ENCODE measurements at regions of chr19 and their contacts with region 1.

Region 1: GRCh38 chr19:47094557-47095475 is 18.8 kb downstream of the ZC3H4 start:
- DNase-seq: no peak
- H3K4me3 ChIP-seq: no peak overlapping the region
- H3K27ac ChIP-seq: no peak overlapping the region; the same call in 1 of the 2 replicates
- H3K4me1 ChIP-seq: peaks cover 2 to 8% (median 4%) of the 10 kb centered on the region in 4 experiments; a peak in 3 of 7 replicates
- H3K27me3 ChIP-seq: no peaks in the 10 kb centered on the region; a peak in 1 of 7 replicates
- CTCF ChIP-seq: no peak
- EP300 ChIP-seq: no peak
- POLR2A ChIP-seq: no peak
- RAD21 ChIP-seq: no peak

Region 2: GRCh38 chr19:47124937-47125668 is 30.3 kb after region 1 on chr19:
- CTCF ChIA-PET with region 1: interaction called, 12 read pairs
- POLR2A ChIA-PET with region 1: interaction called, 4 read pairs
- DNase-seq: no peak
- H3K4me3 ChIP-seq: no peak overlapping the region
- H3K27ac ChIP-seq: no peak overlapping the region
- H3K4me1 ChIP-seq: peaks cover 0 to 4% (median 1%) of the 10 kb centered on the region in 4 experiments; a peak in 1 of 7 replicates
- H3K27me3 ChIP-seq: no peaks in the 10 kb centered on the region
- CTCF ChIP-seq: peak in 2 of 3 experiments; percentile 63 to 67; a peak in 2 of 4 replicates
- EP300 ChIP-seq: no peak
- POLR2A ChIP-seq: no peak
- RAD21 ChIP-seq: peak; percentile 81 to 84

Region 3: DNA sequence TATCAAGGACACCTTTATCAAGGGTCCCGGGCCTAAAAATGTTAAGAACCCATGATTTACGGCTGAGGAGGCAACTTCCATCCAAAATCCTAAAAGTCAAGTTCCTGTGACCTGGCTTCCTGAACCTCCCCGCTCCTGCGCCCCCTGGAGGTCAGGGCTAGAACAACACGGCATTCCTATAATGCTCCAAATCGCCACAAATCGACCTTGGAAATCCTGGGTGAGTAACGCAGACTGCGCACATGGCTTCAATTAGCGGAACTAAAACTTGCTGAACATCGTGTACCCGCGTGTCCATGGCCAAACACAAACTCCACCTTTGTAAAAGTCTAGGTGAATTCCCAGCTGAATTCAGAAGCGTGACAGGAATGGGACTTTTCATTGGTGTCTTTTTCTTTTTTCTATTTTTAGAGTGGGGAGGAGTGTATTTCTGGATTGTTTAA is 210.5 kb after region 1 on chr19:
- CTCF ChIA-PET with region 1: no interaction called
- POLR2A ChIA-PET with region 1: no interaction called
- DNase-seq: peak; percentile 51 to 96
- H3K4me3 ChIP-seq: 0 out of 8 replicates have a peak overlapping the region, but pooled peaks of 1 of the 4 experiments have one; percentile 15
- H3K27ac ChIP-seq: no peak overlapping the region
- H3K4me1 ChIP-seq: peaks cover 0 to 2% (median 0%) of the 10 kb centered on the region in 4 experiments; a peak in 2 of 7 replicates
- H3K27me3 ChIP-seq: no peaks in the 10 kb centered on the region
- CTCF ChIP-seq: peak; percentile 79 to 98 (median 94)
- EP300 ChIP-seq: no peak
- POLR2A ChIP-seq: no peak
- RAD21 ChIP-seq: peak; percentile 43 to 49; a peak in 3 of 4 replicates

Measured in H1 (cell line).